ENCODE measurements at regions of chr5 and their contacts with region 1.

Region 1: GRCh38 chr5:14644623-14645237 is 19.8 kb upstream of the OTULIN start:
- DNase-seq: no peak
- ATAC-seq: no peak
- H3K4me3 ChIP-seq: no peak overlapping the region
- H3K27ac ChIP-seq: no peak overlapping the region
- H3K4me1 ChIP-seq: no peaks in the 10 kb centered on the region
- H3K27me3 ChIP-seq: no peaks in the 10 kb centered on the region
- CTCF ChIP-seq: no peak
- POLR2A ChIP-seq: no peak

Region 2: GRCh38 chr5:14118527-14119320 is 526.0 kb before region 1 on chr5:
- in situ Hi-C with region 1: no loop called
- intact Hi-C with region 1: loop called (anchors 5 kb)
- DNase-seq: no peak
- ATAC-seq: no peak
- H3K4me3 ChIP-seq: no peak overlapping the region
- H3K27ac ChIP-seq: no peak overlapping the region
- H3K4me1 ChIP-seq: peaks cover 0 to 5% of the 10 kb centered on the region in 2 donors
- H3K27me3 ChIP-seq: no peaks in the 10 kb centered on the region
- CTCF ChIP-seq: no peak
- POLR2A ChIP-seq: no peak

Region 3: DNA sequence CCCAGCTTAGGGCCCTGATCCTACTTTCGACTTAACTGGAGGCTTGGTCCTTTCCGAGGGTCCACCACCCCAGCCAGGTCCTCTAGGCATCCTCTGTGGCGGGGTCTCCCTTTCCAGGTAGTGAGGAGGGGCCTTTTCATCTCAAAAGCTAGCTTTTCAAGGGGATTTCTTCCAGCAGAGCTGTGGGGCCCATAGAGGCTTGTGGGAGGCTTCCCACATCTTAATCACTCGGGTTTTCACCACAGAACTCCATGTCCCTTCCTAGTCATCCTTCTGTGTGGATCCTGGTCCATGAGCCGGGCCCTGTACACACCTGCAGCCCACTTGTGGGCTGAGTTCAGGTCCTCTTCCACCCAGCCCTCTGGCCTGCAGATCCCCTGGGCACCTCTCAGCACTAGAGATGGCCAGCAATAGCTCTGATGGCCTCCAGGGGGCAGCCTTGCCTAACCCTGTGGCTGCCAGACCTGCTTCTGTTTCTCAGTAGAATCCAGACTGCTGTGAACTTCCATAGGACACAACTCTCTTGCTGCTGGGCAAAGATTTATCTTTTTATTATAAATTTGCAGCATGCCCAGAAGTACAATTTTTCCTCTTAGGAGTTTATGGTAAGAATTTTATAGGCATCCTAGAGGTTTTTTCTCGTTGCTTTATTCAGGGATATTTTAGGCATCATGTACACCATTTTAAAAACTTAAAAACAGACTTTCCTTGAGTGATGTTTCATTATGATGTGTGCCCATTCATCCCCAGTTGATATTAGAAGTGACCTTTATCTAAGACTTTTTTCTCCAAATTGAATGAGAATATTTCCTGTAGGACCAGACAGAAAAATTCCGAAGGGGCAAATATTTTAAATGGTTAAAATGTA is 292.7 kb before region 1 on chr5:
- in situ Hi-C with region 1: loop called (anchors 5 to 25 kb)
- intact Hi-C with region 1: loop called (anchors 1 kb)
- DNase-seq: peak; percentile 19 to 57
- ATAC-seq: peak; percentile 78 to 94
- H3K4me3 ChIP-seq: no peak overlapping the region
- H3K27ac ChIP-seq: no peak overlapping the region
- H3K4me1 ChIP-seq: no peaks in the 10 kb centered on the region
- H3K27me3 ChIP-seq: no peaks in the 10 kb centered on the region
- CTCF ChIP-seq: peak; percentile 69 to 96 (median 79)
- POLR2A ChIP-seq: no peak

Region 4: DNA sequence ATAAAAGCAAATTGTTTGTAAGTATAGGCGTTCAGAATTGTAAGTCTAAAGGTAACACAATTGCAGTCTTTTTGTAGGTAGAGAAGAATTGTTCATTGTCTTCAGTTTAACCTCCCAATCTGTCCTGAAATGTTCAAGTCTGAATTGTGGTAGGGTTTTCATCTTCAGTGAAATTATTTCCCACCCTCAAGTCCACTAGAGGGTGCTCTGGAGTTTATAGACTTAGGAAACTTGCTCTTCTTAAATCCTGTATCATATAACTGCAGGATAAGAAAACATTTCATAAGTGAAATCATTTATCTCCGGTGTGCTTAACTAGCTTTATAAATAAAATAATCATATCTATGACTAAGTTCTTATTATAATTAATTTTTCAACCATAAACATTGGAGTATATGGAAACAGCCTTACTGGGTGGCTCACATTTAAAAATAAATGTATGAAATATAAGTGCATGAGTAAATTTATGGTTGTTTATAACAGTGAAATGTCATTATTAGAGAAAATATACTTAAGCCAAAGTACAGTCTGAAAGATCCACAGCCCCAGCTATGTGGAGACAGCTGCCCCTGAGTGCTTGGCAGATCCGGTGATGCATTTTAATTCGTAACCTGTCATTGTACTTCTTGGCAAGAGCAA is 245.6 kb before region 1 on chr5:
- in situ Hi-C with region 1: no loop called
- intact Hi-C with region 1: loop called (anchors 1 kb)
- DNase-seq: no peak
- ATAC-seq: peak; percentile 40 to 73
- H3K4me3 ChIP-seq: no peak overlapping the region
- H3K27ac ChIP-seq: peak overlapping the region in 1 of 4 donors; percentile 26
- H3K4me1 ChIP-seq: peaks cover 0 to 11% of the 10 kb centered on the region in 2 donors
- H3K27me3 ChIP-seq: no peaks in the 10 kb centered on the region
- CTCF ChIP-seq: peak; percentile 39 to 72 (median 48)
- POLR2A ChIP-seq: no peak

Region 5: DNA sequence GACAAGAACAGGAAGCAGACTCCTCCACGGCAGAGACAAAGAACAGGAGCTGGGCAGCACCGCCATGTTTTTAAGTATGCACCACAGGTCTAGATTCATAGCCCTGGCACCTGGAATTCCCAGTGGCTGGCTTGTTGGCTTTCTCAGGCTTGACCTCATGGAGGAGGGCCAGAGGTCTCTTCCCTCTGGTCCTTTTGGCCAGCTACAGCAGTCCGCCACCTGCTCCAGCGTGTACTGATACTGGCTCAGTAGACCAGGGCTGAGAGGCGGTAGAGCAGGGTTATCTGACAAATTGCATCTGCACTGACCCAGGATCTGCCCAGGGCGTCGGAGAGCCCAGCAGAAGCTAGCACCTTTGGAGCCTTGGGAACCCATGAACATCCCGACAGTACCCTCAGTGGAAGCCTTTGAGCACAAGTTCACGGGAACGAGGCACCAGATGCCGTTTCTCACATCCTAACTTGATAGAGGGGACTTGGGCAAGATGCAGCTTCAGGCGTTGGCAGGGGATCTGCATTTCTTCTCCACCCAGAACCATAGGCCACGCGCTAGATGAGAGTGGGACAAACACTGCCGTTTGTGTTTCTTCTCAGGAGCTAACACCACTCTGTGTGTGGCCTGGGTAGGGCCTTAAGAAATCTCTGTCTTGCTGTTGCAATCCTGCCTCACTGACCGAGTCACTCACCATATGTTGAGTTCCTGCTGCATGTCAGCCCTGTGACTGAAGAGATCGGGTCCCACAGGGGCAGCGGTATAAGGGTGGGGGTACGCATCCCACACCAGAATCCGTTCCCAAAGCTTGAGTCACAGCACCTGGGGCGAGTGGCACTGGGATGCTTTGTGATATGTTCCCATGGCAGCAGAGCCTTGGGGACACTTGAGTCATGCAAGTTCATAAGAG is 153.5 kb before region 1 on chr5:
- in situ Hi-C with region 1: no loop called
- intact Hi-C with region 1: loop called (anchors 10 kb)
- DNase-seq: peak in 1 of 2 donors; percentile 44
- ATAC-seq: peak in 1 of 2 donors; percentile 72
- H3K4me3 ChIP-seq: no peak overlapping the region
- H3K27ac ChIP-seq: peak overlapping the region in 1 of 4 donors; percentile 14
- H3K4me1 ChIP-seq: peaks cover 0 to 14% of the 10 kb centered on the region in 2 donors
- H3K27me3 ChIP-seq: no peaks in the 10 kb centered on the region
- CTCF ChIP-seq: no peak
- POLR2A ChIP-seq: no peak

Measured in gastrocnemius medialis (tissue), 4 donors.